Calu3 (cell line): ENCODE measurements at regions of chr5 and their contacts with region 1.

Region 1: DNA sequence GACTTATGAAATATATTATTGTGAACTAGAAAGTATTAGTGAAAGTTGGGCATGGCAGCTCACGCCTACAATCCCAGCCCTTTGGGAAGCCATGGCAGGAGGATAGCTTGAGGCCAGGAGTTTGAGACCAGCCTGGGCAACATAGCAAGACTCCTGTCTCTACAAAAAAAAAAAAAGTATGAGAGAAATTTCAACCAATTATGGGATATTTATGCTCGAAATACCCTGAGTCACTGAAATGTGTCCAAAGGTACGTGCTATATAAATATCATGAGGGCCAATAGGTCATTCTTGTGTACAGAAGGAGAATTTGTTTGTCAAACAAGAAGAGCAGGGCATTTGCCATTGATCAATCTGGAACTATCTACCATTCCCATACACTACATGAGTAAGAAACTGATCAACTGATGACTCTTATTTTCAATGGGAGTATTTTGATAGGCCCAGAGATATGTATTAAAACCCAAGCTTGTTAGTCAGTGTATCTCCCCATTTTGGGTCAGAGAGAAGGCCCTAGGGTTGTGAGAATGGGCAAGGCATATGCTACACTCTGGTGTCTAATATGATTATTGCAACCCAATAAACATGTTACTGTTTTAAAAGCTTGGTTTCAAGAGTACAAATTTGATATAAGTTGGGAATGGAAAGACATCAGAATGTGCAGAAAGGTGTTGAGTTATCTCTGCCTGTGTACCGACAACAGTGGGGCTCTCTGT is 21.7 kb upstream of the HOMER1 start:
- DNase-seq: no peak
- H3K4me3 Mint-ChIP-seq: no peak overlapping the region
- H3K27ac Mint-ChIP-seq: no peak overlapping the region
- H3K4me1 Mint-ChIP-seq: no peaks in the 10 kb centered on the region
- H3K27me3 Mint-ChIP-seq: no peaks in the 10 kb centered on the region
- CTCF ChIP-seq: peak; percentile 14

Region 2: DNA sequence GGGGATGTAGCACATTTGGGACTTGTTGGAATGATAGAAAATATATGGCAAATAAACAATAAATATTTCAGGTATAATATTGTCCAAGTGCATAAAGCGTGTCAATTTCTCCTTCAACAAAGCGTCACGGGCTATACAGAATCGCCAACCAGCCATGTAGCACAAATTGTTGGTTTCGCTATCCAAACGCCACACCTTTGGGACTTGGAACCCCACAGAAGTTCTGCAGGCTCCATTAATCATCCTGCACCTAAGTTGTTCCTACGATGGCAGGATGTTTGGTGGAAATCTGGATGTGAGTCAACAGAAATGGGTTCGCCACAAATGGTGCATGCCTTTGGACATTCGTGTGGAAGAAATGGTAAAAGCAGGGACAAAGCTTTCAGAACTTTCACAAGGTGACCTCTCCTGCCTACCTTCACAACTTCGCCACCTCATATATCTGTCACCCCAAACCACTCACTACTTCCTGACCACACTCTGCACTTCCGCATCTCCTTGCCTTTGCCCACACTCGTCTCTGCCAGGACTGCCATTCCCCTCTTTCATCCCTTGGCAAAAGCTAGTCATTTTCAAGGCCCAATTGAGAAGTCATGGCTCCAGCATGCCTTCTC is 982.8 kb before region 1 on chr5:
- CTCF ChIA-PET with region 1: no interaction called
- intact Hi-C with region 1: no loop called
- DNase-seq: no peak
- H3K4me3 Mint-ChIP-seq: no peak overlapping the region
- H3K27ac Mint-ChIP-seq: no peak overlapping the region
- H3K4me1 Mint-ChIP-seq: peaks cover 7% of the 10 kb centered on the region
- H3K27me3 Mint-ChIP-seq: no peaks in the 10 kb centered on the region
- CTCF ChIP-seq: no peak

Region 3: DNA sequence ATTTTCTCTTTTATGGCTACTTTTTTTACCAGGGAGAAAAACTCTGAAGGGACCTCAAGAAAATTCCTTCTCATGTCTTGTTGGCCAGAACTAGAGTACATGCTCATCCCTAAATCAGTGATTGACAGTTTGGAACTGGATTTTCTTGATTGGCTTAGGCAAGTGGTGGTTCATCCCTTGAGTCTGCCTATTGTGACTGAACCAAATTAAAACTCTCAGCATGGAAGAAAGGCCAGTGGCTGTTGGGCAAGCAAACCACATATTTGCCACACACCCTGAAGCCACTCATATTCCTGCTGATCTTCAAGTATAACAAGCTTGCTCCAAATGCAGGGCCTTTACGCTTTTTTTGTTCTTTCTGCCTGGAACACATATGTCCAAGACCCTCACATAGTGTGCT is 14.5 kb before region 1 on chr5:
- CTCF ChIA-PET with region 1: interaction called, 4 read pairs
- intact Hi-C with region 1: loop called (anchors 1 kb)
- DNase-seq: no peak
- H3K4me3 Mint-ChIP-seq: no peak overlapping the region
- H3K27ac Mint-ChIP-seq: no peak overlapping the region
- H3K4me1 Mint-ChIP-seq: peaks cover 14% of the 10 kb centered on the region
- H3K27me3 Mint-ChIP-seq: no peaks in the 10 kb centered on the region
- CTCF ChIP-seq: no peak

Region 4: GRCh38 chr5:79630444-79630843 is 94.8 kb after region 1 on chr5:
- CTCF ChIA-PET with region 1: no interaction called
- intact Hi-C with region 1: no loop called
- DNase-seq: no peak
- H3K4me3 Mint-ChIP-seq: no peak overlapping the region
- H3K27ac Mint-ChIP-seq: no peak overlapping the region
- H3K4me1 Mint-ChIP-seq: no peaks in the 10 kb centered on the region
- H3K27me3 Mint-ChIP-seq: no peaks in the 10 kb centered on the region
- CTCF ChIP-seq: no peak